ENCODE measurements at regions of chr9 and their contacts with region 1.

Region 1: GRCh38 chr9:35510745-35511428 is 21.0 kb downstream of the RUSC2 start:
- DNase-seq: peak; percentile 95

Region 2: GRCh38 chr9:35538361-35539234 is 27.7 kb after region 1 on chr9:
- intact Hi-C with region 1: loop called in 1 of 2 experiments (anchors 2 kb)
- DNase-seq: peak; percentile 92

Region 3: GRCh38 chr9:35603987-35604577 is 93.2 kb after region 1 on chr9:
- intact Hi-C with region 1: no loop called
- DNase-seq: peak; percentile 100